Common myeloid progenitor, CD34-positive (primary cell): ENCODE measurements at regions of chr1 and their contacts with region 1.

Region 1: GRCh38 chr1:92817986-92818764 is 13.7 kb upstream of the RPL5 start:
- DNase-seq: peak; percentile 39 to 58 (median 57)
- H3K4me3 ChIP-seq: no peak overlapping the region
- H3K27ac ChIP-seq: no peak overlapping the region
- H3K4me1 ChIP-seq: no peaks in the 10 kb centered on the region
- H3K27me3 ChIP-seq: no peaks in the 10 kb centered on the region

Region 2: GRCh38 chr1:92728697-92729096 is 89.5 kb before region 1 on chr1:
- CTCF ChIA-PET with region 1: no interaction called
- POLR2A ChIA-PET with region 1: no interaction called
- DNase-seq: peak in 1 of 3 donors; percentile 11
- H3K4me3 ChIP-seq: no peak overlapping the region
- H3K27ac ChIP-seq: no peak overlapping the region
- H3K4me1 ChIP-seq: no peaks in the 10 kb centered on the region
- H3K27me3 ChIP-seq: no peaks in the 10 kb centered on the region

Region 3: DNA sequence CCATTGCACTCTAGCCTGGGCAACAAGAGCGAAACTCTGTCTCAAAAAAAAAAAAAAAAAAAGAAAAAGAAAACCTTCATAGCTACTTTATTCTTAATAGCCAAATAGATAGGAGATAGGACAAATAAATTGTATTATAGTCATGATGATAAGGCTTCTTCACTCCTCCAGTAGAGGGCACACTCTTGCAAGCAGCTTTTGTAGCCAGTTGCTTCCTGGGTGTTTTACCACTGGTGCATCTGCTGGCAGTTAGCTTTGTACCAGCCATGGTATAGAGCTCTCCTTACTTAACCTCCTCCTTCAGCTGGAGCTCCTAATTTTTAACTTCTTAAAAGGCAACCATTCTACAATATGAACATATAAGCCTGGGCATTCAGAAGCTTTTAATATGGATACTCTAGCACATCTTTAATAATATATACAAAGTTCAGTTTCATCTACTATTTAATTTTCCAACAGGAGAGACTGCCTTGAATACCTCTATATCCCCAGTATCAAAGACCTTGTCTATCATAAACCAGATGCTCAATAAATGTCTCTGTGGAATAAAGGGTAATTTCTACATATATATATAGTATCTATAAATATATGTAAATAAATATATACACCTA is 69.0 kb before region 1 on chr1:
- CTCF ChIA-PET with region 1: interaction called, 19 read pairs
- POLR2A ChIA-PET with region 1: no interaction called
- DNase-seq: peak; percentile 46 to 73 (median 69)
- H3K4me3 ChIP-seq: no peak overlapping the region
- H3K27ac ChIP-seq: no peak overlapping the region
- H3K4me1 ChIP-seq: no peaks in the 10 kb centered on the region
- H3K27me3 ChIP-seq: no peaks in the 10 kb centered on the region

Region 4: GRCh38 chr1:92791487-92792066 is 26.6 kb before region 1 on chr1:
- CTCF ChIA-PET with region 1: interaction called, 22 read pairs
- POLR2A ChIA-PET with region 1: no interaction called
- DNase-seq: no peak
- H3K4me3 ChIP-seq: no peak overlapping the region
- H3K27ac ChIP-seq: no peak overlapping the region
- H3K4me1 ChIP-seq: no peaks in the 10 kb centered on the region
- H3K27me3 ChIP-seq: peaks cover 3 to 22% (median 10%) of the 10 kb centered on the region in 5 experiments

Region 5: DNA sequence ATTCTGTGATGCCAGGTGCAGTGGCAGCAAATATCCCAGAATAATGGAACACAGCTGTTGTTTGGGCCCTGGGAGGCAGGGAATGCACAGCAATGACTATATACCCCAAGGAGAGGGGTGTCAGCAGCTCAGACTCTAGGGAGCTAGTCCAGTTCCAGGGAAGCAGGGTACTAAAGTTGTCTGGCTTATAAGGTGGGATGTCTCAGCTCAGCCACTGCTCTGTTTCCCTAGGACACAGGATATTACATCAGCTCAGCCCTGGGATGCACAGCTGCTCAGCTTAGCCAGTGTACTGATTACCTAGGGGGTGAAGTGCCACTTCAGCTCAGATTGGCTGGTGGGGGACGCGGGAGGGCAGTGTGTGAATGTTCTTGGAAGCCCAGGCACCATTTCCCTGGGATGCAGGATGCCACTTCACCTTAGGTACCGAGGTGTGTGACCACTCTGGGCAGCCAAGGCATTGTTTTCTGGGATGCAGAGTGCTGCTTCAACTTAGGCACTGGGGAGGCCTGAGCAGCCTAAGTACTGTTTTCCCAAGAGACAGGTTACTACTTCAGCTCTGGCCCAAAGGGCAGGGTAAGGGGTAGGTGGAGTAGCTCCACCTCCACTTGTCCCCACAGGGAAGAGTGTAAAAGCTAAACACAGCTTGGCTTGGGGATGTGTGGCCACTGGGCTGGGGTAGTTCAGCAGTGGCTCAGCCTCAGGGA is 83.7 kb after region 1 on chr1:
- CTCF ChIA-PET with region 1: no interaction called
- POLR2A ChIA-PET with region 1: no interaction called
- DNase-seq: no peak
- H3K4me3 ChIP-seq: no peak overlapping the region
- H3K27ac ChIP-seq: no peak overlapping the region
- H3K4me1 ChIP-seq: no peaks in the 10 kb centered on the region
- H3K27me3 ChIP-seq: no peaks in the 10 kb centered on the region

Region 6: DNA sequence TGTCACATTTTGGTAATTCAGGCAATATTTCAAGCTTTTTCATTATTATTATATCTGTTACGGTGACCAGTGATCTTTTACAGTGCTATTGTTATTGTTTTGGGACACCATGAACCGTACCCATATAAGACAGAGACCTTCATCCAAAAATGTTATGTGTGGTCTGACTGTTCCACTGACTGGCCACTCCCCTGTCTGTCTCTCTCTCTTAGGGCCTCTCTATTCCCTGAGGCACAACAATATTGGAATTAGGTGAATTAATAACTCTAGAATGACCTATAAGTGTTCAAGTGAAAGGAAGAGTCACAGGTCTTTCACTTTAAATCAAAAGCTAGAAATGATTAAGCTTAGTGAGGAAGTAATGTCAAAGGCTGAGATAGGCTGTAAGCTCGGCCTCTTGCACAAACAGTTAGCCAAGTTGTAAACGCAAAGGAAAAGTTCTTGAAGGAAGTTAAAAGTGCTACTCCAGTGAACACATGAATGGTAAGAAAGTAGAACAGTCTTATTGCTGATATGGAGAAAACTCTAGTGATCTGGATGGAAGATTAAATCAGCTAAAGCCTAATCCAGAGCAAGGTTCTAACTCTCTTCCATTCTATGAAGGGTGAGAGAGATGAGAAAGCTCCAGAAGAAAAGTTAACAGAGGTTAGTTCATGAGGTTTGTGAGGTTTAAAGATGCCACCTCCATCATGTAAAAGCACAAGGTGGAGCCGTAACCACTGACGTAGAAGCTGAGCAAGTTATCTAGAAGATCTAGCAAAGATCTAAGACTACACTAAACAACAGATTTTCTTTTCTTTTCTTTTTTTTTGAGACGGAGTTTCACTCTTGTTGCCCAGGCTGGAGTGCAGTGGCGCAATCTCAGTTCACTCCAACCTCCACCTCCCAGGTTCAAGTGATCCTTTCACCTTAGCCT is 162.8 kb after region 1 on chr1:
- CTCF ChIA-PET with region 1: no interaction called
- POLR2A ChIA-PET with region 1: no interaction called
- DNase-seq: no peak
- H3K4me3 ChIP-seq: no peak overlapping the region
- H3K27ac ChIP-seq: no peak overlapping the region
- H3K4me1 ChIP-seq: no peaks in the 10 kb centered on the region
- H3K27me3 ChIP-seq: no peaks in the 10 kb centered on the region